ENCODE measurements at regions of chr4 and their contacts with region 1.

Region 1: GRCh38 chr4:70687821-70688794 is at the start of gene UTP3:
- DNase-seq: peak; percentile 93
- H3K4me3 Mint-ChIP-seq: peak within 1 kb of the TSS; percentile 94
- H3K27ac Mint-ChIP-seq: peak within 1 kb of the TSS; percentile 91
- H3K4me1 Mint-ChIP-seq: peaks cover 45% of the 10 kb centered on the region
- H3K27me3 Mint-ChIP-seq: no peaks in the 10 kb centered on the region
- total RNA-seq, gene UTP3: 38.1 to 40.2 TPM

Region 2: DNA sequence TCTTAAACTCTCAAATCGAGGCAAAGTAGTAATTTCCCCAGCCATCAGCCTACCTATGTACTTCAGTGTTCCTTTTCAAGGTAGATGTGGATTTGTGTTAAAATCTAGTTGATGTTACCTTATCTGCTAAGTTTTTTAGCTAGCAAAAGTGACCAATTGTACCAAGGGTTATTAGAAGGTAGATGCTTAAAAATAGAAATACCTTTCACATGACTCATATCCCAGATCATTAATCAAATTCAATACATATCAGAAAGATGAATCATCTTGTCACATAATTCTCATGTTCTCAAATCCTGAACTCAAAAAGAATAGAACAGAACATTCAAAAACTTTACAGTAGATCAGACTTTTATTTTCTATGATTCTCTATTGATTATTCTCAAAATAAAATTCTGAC is 56.1 kb before region 1 on chr4:
- CTCF ChIA-PET with region 1: no interaction called
- POLR2A ChIA-PET with region 1: no interaction called
- DNase-seq: no peak
- H3K4me3 Mint-ChIP-seq: no peak overlapping the region
- H3K27ac Mint-ChIP-seq: no peak overlapping the region
- H3K4me1 Mint-ChIP-seq: peaks cover 2% of the 10 kb centered on the region
- H3K27me3 Mint-ChIP-seq: peaks cover 10% of the 10 kb centered on the region

Region 3: DNA sequence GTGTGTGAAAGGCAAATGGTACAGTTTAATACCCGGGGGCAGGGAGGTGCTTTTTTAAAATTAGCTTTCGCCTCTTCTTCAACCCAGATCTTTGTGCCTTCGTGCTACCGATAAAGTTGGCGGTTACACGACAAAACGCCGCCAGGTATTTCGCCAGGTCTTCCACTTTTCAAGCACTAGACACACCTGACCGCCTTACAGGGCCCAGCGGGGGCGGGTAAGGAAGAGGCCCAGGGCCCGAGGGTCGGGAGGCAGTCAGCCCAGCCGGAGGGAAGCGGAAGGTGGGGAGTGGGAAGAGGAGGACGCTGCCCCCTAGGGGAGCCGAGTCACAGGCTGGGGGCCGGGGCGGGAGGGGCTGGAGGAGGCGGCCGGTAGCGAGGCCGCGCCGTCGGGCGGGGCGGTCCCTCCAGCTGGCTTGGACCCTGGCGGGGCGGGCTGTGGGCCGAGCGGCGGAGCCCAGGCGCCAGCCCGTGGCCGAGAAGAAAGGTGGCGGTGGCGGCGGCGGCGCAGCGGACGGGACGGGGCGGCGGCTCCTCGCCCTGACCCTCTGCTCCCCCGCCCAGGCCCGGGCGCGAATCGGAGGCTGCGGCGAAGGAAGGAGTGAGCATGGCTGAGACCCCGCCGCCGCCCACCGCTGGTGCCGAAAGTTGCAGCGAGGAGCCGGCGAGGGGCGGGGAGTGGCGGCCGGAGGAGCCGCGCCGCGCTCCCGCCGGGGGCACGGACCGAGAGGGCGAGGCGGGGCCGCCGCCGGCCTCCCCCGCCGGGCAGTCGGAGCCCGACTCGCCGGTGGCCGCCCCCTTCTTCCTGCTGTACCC is 16.4 kb after region 1 on chr4:
- CTCF ChIA-PET with region 1: interaction called, 12 read pairs
- POLR2A ChIA-PET with region 1: interaction called, 4 read pairs
- DNase-seq: peak; percentile 53
- H3K4me3 Mint-ChIP-seq: peak overlapping the region; percentile 89
- H3K27ac Mint-ChIP-seq: peak overlapping the region; percentile 94
- H3K4me1 Mint-ChIP-seq: peaks cover 36% of the 10 kb centered on the region
- H3K27me3 Mint-ChIP-seq: no peaks in the 10 kb centered on the region

Region 4: GRCh38 chr4:71472946-71473345 is 784.8 kb after region 1 on chr4:
- CTCF ChIA-PET with region 1: no interaction called
- POLR2A ChIA-PET with region 1: no interaction called
- DNase-seq: no peak
- H3K4me3 Mint-ChIP-seq: no peak overlapping the region
- H3K27ac Mint-ChIP-seq: no peak overlapping the region
- H3K4me1 Mint-ChIP-seq: no peaks in the 10 kb centered on the region
- H3K27me3 Mint-ChIP-seq: no peaks in the 10 kb centered on the region

Measured in activated CD4-positive, alpha-beta T cell treated with anti-CD3 and anti-CD28 coated beads, Interleukin-2, amount 10 ng/mL, durations not matched to agents 7 days and 5 days (primary cell).